Common myeloid progenitor, CD34-positive (primary cell): ENCODE measurements at regions of chr6 and their contacts with region 1.

Region 1: DNA sequence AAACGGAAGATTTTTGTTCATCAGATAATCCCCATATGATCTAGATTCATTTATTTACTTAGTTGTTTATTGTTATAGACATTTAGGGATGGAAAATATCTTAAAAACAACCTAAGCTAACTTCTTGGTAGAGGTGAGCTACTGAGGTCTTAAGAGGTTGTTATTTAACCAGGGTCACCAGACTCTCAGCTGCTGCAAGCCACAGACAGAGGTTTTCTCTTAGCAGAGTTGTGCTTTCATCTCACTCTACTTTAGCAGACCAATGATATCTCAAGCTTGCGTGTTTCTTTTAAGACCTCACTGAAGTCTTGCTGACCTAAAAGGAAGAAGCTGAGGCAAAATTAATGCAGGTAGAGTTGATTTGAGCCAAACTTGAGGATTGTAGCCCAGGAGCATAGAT is 43.6 kb downstream of the NCOA7 start:
- DNase-seq: peak in 1 of 3 donors; percentile 55
- H3K4me3 ChIP-seq: peak overlapping the region in 3 of 7 experiments; percentile 0 to 22 (median 13)
- H3K27ac ChIP-seq: peak overlapping the region; percentile 25 to 44
- H3K4me1 ChIP-seq: peaks cover 39 to 72% (median 60%) of the 10 kb centered on the region in 4 experiments
- H3K27me3 ChIP-seq: no peaks in the 10 kb centered on the region

Region 2: GRCh38 chr6:125658759-125659431 is 175.5 kb before region 1 on chr6:
- CTCF ChIA-PET with region 1: no interaction called
- POLR2A ChIA-PET with region 1: no interaction called
- DNase-seq: no peak
- H3K4me3 ChIP-seq: no peak overlapping the region
- H3K27ac ChIP-seq: no peak overlapping the region
- H3K4me1 ChIP-seq: no peaks in the 10 kb centered on the region
- H3K27me3 ChIP-seq: peaks cover 0 to 3% (median 0%) of the 10 kb centered on the region in 5 experiments

Region 3: DNA sequence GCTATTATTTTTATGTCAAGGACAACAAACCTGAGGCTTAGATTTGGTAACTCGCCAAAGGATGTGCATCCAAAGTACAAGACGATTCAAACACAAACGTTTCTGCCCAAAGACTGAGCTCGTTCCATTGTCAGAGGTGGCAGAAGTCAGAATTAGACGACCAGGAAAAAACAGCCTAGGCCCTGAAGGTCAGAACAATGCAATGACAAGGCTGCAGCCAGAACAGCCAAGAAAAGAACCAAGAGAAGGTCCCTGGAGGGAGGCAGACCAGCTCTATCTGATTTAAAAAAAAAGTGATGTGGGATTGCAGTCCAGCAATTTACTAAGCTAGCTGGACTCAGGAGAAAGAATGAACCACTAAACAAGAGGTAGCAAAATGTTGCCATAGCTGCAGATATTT is 10.6 kb after region 1 on chr6:
- CTCF ChIA-PET with region 1: interaction called, 10 read pairs
- POLR2A ChIA-PET with region 1: interaction called, 4 read pairs
- DNase-seq: no peak
- H3K4me3 ChIP-seq: no peak overlapping the region
- H3K27ac ChIP-seq: no peak overlapping the region
- H3K4me1 ChIP-seq: peaks cover 12 to 43% (median 25%) of the 10 kb centered on the region in 4 experiments
- H3K27me3 ChIP-seq: no peaks in the 10 kb centered on the region